OCI-LY7 (cell line): ENCODE measurements at regions of chr10 and their contacts with region 1.

Region 1: DNA sequence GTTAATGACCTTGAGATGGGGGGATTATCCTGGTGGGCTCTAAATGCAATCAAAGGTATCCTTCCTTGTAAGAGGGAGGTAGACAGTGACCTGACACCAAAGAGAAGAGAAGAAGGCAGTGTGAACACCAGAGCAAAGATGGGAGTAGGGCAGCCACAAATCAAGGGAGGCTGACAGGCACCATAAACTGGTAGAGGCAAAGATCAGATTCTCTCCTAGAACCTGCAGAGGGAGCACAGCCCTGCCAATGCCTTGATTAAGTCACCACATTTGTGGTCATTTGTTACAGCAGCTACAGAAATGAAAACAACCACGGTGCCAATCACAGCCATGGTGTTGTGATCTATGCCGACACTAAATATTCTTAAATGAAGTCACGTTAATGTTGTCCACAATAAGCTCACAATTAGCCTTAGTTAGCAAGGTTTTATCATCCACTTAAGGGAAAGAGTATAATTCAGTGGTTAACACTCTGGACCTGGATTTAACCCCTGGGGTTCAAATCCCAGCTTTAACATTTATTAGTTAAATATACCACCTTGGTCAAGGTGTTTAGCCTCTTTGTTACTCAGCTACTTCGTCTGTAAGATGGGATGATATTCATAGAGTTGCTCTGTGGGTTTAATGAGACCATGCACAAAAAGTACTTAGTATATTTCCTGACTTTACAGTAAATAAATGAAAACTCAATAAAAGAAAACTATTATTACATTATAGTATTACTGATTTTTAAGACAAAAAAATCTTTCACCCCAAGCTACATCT is 70.8 kb downstream of the SGMS1 start:
- DNase-seq: peak; percentile 27
- H3K4me3 ChIP-seq: no peak overlapping the region
- H3K27ac ChIP-seq: no peak overlapping the region
- H3K4me1 ChIP-seq: peaks cover 16% of the 10 kb centered on the region
- CTCF ChIP-seq: peak; percentile 60

Region 2: GRCh38 chr10:50585921-50586739 is 33.2 kb after region 1 on chr10:
- CTCF ChIA-PET with region 1: no interaction called
- POLR2A ChIA-PET with region 1: interaction called, 11 read pairs
- intact Hi-C with region 1: no loop called
- DNase-seq: no peak
- H3K4me3 ChIP-seq: no peak overlapping the region
- H3K27ac ChIP-seq: no peak overlapping the region
- H3K4me1 ChIP-seq: no peaks in the 10 kb centered on the region
- CTCF ChIP-seq: no peak

Region 3: DNA sequence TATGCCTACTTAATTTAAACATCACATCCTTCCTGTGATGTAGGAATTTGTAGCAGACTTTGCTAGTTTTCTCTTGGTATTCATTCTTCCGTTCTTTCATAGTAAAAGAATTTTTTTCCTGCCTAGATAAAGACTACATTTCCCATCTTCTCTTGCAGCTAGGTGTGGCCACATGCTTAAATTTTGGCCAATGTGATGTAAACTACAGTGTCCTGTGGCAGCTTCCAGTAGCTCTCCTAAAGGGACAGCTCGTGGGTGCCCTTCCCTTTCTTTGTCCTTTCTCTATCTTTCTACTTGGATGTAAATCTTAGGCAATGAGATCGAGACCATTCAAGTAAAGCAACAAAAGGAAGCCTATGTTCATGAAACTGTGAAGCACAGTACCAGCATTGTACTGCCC is 245.3 kb after region 1 on chr10:
- CTCF ChIA-PET with region 1: no interaction called
- POLR2A ChIA-PET with region 1: no interaction called
- intact Hi-C with region 1: no loop called
- DNase-seq: no peak
- H3K4me3 ChIP-seq: no peak overlapping the region
- H3K27ac ChIP-seq: no peak overlapping the region
- H3K4me1 ChIP-seq: no peaks in the 10 kb centered on the region
- CTCF ChIP-seq: no peak